HCT116 (cell line): ENCODE measurements at regions of chr4 and their contacts with region 1.

Region 1: GRCh38 chr4:74632634-74633033 is 161.7 kb downstream of the BTC start:
- DNase-seq: peak; percentile 95
- ATAC-seq: peak; percentile 64
- H3K4me3 ChIP-seq: peak overlapping the region in 1 of 2 experiments; percentile 9; a peak in 1 of 4 replicates
- H3K27ac ChIP-seq: peak overlapping the region; percentile 94
- H3K4me1 ChIP-seq: peaks cover 86 to 100% of the 10 kb centered on the region in 2 experiments
- H3K27me3 ChIP-seq: no peaks in the 10 kb centered on the region
- CTCF ChIP-seq: no peak
- POLR2A ChIP-seq: no peak
- RAD21 ChIP-seq: no peak

Region 2: DNA sequence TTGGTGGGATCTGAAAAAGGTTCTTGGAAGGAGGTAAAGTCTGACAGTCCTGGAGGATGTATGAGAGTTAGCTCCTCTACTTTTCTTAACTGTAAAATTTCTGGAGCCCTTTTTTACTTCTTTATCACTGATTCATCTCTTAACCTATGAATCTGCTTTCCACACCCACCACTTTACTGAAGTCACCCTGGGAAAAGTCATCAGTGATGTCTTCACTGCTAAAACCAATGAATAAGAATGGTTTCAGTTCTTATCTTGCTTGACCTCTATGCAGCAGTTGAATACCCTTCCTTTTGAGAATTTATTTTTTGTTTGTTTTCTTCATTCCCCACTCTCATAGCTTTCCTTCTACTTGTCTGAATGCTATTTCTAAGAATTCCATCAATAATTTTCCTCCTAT is 107.6 kb before region 1 on chr4:
- CTCF ChIA-PET with region 1: no interaction called
- POLR2A ChIA-PET with region 1: no interaction called
- RAD21 ChIA-PET with region 1: no interaction called
- intact Hi-C with region 1: no loop called
- DNase-seq: no peak
- ATAC-seq: no peak
- H3K4me3 ChIP-seq: no peak overlapping the region
- H3K27ac ChIP-seq: no peak overlapping the region
- H3K4me1 ChIP-seq: peaks cover 6 to 13% of the 10 kb centered on the region in 2 experiments; a peak in 3 of 4 replicates
- H3K27me3 ChIP-seq: no peaks in the 10 kb centered on the region
- CTCF ChIP-seq: no peak
- POLR2A ChIP-seq: no peak
- RAD21 ChIP-seq: no peak

Region 3: DNA sequence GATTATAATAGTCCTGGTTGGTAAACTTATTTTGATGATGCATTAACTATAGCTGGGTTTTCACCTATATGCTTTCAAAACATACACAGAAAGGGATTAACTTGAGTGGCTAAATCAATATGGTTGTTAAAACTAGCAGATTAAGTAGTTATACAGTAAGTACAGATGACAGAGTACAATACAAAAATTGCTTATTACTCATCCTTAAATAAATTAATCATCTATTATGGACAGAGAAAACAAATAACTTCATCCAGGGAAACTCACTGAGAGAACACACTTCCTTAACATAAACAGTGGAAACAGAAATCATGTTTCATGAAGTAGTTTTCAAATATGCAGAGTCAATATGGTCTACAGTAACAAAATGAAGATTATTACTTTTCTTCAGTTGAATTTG is 54.3 kb before region 1 on chr4:
- CTCF ChIA-PET with region 1: no interaction called
- POLR2A ChIA-PET with region 1: no interaction called
- RAD21 ChIA-PET with region 1: no interaction called
- intact Hi-C with region 1: no loop called
- DNase-seq: no peak
- ATAC-seq: no peak
- H3K4me3 ChIP-seq: no peak overlapping the region
- H3K27ac ChIP-seq: no peak overlapping the region
- H3K4me1 ChIP-seq: peaks cover 4 to 9% of the 10 kb centered on the region in 2 experiments; a peak in 2 of 4 replicates
- H3K27me3 ChIP-seq: no peaks in the 10 kb centered on the region
- CTCF ChIP-seq: no peak
- POLR2A ChIP-seq: no peak
- RAD21 ChIP-seq: no peak

Region 4: GRCh38 chr4:74649230-74649629 is 16.6 kb after region 1 on chr4:
- CTCF ChIA-PET with region 1: no interaction called
- POLR2A ChIA-PET with region 1: interaction called, 65 read pairs
- RAD21 ChIA-PET with region 1: no interaction called
- intact Hi-C with region 1: loop called (anchors 1 kb)
- DNase-seq: no peak
- ATAC-seq: no peak
- H3K4me3 ChIP-seq: no peak overlapping the region
- H3K27ac ChIP-seq: peak overlapping the region; percentile 97
- H3K4me1 ChIP-seq: peaks cover 43 to 57% of the 10 kb centered on the region in 2 experiments
- H3K27me3 ChIP-seq: no peaks in the 10 kb centered on the region
- CTCF ChIP-seq: no peak
- POLR2A ChIP-seq: no peak
- RAD21 ChIP-seq: no peak

Region 5: DNA sequence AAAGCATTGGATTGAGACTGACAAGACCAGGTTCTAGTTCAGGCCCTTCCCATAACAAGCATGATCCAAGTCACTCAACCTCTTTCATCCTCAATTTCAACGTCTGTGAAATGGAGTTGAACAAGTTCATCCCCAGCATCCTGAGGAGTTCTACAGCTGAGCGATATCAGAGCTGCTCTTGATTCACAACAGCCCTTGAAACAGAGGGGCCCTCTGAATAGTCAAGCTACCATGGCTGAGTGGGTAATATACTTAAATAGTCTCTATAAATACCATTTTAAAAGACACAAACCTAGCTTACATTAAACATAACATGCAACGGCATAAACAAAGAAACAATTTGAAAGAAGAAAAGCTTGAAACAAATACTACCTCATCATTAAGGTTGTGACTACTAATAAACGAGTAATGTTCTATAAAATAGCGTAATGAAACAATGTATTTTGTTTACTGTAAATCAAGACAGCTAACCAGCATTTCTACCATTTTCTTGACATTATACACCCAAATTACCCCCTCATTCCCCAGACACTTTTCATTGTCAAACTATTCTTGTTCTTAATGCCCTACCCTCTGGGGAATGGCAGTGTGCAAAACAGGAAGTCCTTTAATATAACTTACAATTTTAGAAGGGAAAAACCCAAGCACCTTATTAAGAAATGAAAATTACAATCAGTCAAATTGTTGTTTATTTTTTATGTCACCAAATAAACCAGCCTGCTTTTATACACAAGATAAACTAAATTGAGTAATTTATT is 502.6 kb after region 1 on chr4:
- CTCF ChIA-PET with region 1: no interaction called
- POLR2A ChIA-PET with region 1: no interaction called
- RAD21 ChIA-PET with region 1: no interaction called
- intact Hi-C with region 1: no loop called
- DNase-seq: no peak
- ATAC-seq: no peak
- H3K4me3 ChIP-seq: no peak overlapping the region
- H3K27ac ChIP-seq: no peak overlapping the region
- H3K4me1 ChIP-seq: no peaks in the 10 kb centered on the region
- H3K27me3 ChIP-seq: no peaks in the 10 kb centered on the region
- CTCF ChIP-seq: no peak
- POLR2A ChIP-seq: no peak
- RAD21 ChIP-seq: no peak